ENCODE measurements at regions of chr17 and their contacts with region 1.

Region 1: DNA sequence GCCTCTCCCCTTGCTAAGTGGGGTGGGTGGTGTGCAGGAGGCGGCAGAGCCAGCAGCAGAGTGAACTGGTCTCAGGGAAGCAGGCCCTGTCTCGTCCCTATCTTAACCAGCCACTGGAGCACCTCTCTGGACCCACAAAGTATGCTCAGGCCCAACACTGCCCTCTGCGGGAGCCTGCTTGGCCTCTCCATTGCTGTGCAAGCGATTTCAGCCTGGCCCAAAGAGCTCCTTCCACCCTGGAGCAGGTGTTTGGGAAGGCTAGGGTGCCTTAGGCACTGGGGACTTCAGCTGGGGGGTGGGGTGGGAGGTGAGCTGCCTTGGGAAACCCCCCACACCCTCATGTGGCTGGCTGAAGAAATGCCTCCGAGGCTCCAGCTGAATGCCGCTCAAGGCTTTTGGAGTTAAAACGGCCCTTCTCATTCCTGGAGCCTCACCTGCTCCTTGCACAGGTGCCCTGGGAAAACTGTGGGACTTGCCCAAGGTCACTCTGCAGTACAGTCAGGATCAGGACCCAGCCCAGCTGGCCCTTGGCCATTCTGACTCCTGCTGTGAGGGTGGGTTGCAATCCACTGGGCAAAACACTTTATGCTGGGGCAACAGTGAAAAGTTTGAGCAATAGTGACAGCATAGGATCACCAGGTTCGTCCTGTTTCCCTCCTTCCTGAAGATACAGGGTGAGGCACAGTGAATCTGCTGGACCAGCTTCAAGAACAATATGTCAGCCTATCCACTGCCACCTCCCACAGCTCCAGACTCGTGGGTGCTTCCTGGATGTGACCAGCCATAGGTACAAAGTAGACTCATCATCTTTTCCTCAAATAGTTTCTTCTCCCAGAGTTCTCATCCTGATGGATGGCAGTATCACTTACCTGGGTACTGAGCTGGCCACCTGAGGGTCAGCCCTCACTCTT is 5.9 kb upstream of the UBE2O start:
- DNase-seq: peak; percentile 87
- ATAC-seq: peak; percentile 94
- H3K4me3 Mint-ChIP-seq: no peak overlapping the region
- H3K27ac Mint-ChIP-seq: no peak overlapping the region
- H3K4me1 Mint-ChIP-seq: peaks cover 14% of the 10 kb centered on the region
- H3K27me3 Mint-ChIP-seq: peaks cover 2% of the 10 kb centered on the region; the same call in 1 of the 2 replicates
- CTCF ChIP-seq: no peak

Region 2: GRCh38 chr17:76365256-76365903 is 93.5 kb before region 1 on chr17:
- CTCF ChIA-PET with region 1: interaction called, 13 read pairs
- POLR2A ChIA-PET with region 1: no interaction called
- DNase-seq: no peak
- ATAC-seq: peak; percentile 52
- H3K4me3 Mint-ChIP-seq: no peak overlapping the region
- H3K27ac Mint-ChIP-seq: 0 out of 2 replicates have a peak overlapping the region, but pooled peaks have one; percentile 25
- H3K4me1 Mint-ChIP-seq: peaks cover 26% of the 10 kb centered on the region
- H3K27me3 Mint-ChIP-seq: no peaks in the 10 kb centered on the region; the same call in 1 of the 2 replicates
- CTCF ChIP-seq: no peak

Region 3: DNA sequence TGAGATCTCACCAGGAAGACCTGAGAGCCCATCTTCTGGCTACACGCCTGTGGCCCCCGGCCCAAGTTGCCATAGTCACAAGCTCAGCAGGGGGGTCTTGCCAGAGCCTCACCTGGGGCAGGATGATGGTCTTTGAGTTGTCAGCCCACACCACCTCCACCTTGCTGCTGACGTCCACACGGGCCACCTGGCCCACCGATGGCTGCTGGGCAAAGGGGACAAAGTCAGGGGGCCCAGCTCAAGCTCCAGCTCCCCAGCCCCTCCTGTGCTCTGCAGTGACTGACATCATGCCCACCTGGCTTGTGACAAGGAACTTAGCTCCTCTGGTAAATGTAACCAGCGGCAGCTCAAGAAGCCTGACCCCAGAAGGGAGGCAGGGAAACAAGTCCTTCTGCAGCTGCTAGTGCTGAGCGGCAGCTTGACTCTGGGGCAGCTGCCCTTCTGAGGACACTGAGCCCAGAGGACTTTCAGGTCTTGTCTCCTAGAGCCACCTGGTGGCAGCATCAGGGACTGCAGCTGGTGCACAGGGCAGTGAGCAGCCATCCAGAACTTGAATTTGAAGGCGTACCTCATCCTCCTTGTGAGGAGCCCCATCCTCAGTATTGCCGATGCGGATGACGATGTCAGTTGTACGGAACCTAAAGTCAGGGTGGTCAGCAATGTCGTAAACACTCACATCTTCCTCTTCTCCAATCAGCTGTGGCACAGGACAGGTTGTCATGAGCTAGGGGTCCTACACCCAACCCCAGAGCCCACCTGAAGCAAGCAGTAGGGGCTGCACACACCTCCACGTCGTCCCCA is 60.9 kb before region 1 on chr17:
- CTCF ChIA-PET with region 1: interaction called, 49 read pairs
- POLR2A ChIA-PET with region 1: no interaction called
- DNase-seq: peak; percentile 96
- ATAC-seq: peak; percentile 95
- H3K4me3 Mint-ChIP-seq: no peak overlapping the region
- H3K27ac Mint-ChIP-seq: no peak overlapping the region
- H3K4me1 Mint-ChIP-seq: no peaks in the 10 kb centered on the region
- H3K27me3 Mint-ChIP-seq: no peaks in the 10 kb centered on the region
- CTCF ChIP-seq: peak; percentile 96

Region 4: GRCh38 chr17:76421044-76421407 is 37.8 kb before region 1 on chr17:
- CTCF ChIA-PET with region 1: interaction called, 18 read pairs
- POLR2A ChIA-PET with region 1: no interaction called
- DNase-seq: no peak
- ATAC-seq: peak; percentile 58
- H3K4me3 Mint-ChIP-seq: no peak overlapping the region
- H3K27ac Mint-ChIP-seq: peak overlapping the region; percentile 69
- H3K4me1 Mint-ChIP-seq: peaks cover 42% of the 10 kb centered on the region
- H3K27me3 Mint-ChIP-seq: no peaks in the 10 kb centered on the region
- CTCF ChIP-seq: no peak

Region 5: GRCh38 chr17:76446449-76447231 is 12.2 kb before region 1 on chr17:
- CTCF ChIA-PET with region 1: interaction called, 30 read pairs
- POLR2A ChIA-PET with region 1: interaction called, 3 read pairs
- DNase-seq: no peak
- ATAC-seq: no peak
- H3K4me3 Mint-ChIP-seq: peak overlapping the region; percentile 50
- H3K27ac Mint-ChIP-seq: peak overlapping the region; percentile 86
- H3K4me1 Mint-ChIP-seq: peaks cover 94% of the 10 kb centered on the region
- H3K27me3 Mint-ChIP-seq: no peaks in the 10 kb centered on the region
- CTCF ChIP-seq: no peak

Region 6: GRCh38 chr17:76506408-76507349 is 47.8 kb after region 1 on chr17:
- CTCF ChIA-PET with region 1: interaction called, 17 read pairs
- POLR2A ChIA-PET with region 1: no interaction called
- DNase-seq: peak; percentile 94
- ATAC-seq: peak; percentile 80
- H3K4me3 Mint-ChIP-seq: peak overlapping the region; percentile 25
- H3K27ac Mint-ChIP-seq: no peak overlapping the region
- H3K4me1 Mint-ChIP-seq: peaks cover 12% of the 10 kb centered on the region
- H3K27me3 Mint-ChIP-seq: peaks cover 21% of the 10 kb centered on the region
- CTCF ChIP-seq: peak; percentile 92

Region 7: GRCh38 chr17:76681222-76682137 is 222.6 kb after region 1 on chr17:
- CTCF ChIA-PET with region 1: interaction called, 12 read pairs
- POLR2A ChIA-PET with region 1: no interaction called
- DNase-seq: peak; percentile 89
- ATAC-seq: peak; percentile 85
- H3K4me3 Mint-ChIP-seq: no peak overlapping the region
- H3K27ac Mint-ChIP-seq: no peak overlapping the region
- H3K4me1 Mint-ChIP-seq: peaks cover 4% of the 10 kb centered on the region
- H3K27me3 Mint-ChIP-seq: no peaks in the 10 kb centered on the region
- CTCF ChIP-seq: peak; percentile 48; the same call in 1 of the 2 replicates

Measured in WTC11 (cell line).